ENCODE measurements at regions of chr7 and their contacts with region 1.

Region 1: GRCh38 chr7:77536413-77537135 is 521 bp upstream of the PTPN12 start:
- DNase-seq: peak; percentile 97
- H3K4me3 Mint-ChIP-seq: peak overlapping the region; percentile 78
- H3K27ac Mint-ChIP-seq: peak overlapping the region; percentile 86
- H3K4me1 Mint-ChIP-seq: peaks cover 12% of the 10 kb centered on the region
- H3K27me3 Mint-ChIP-seq: no peaks in the 10 kb centered on the region
- CTCF ChIP-seq: no peak

Region 2: GRCh38 chr7:77331938-77332695 is 204.5 kb before region 1 on chr7:
- CTCF ChIA-PET with region 1: no interaction called
- POLR2A ChIA-PET with region 1: interaction called, 3 read pairs
- intact Hi-C with region 1: loop called (anchors 10 kb)
- DNase-seq: peak; percentile 90
- H3K4me3 Mint-ChIP-seq: no peak overlapping the region
- H3K27ac Mint-ChIP-seq: no peak overlapping the region
- H3K4me1 Mint-ChIP-seq: peaks cover 26% of the 10 kb centered on the region
- H3K27me3 Mint-ChIP-seq: no peaks in the 10 kb centered on the region
- CTCF ChIP-seq: peak; percentile 75

Region 3: DNA sequence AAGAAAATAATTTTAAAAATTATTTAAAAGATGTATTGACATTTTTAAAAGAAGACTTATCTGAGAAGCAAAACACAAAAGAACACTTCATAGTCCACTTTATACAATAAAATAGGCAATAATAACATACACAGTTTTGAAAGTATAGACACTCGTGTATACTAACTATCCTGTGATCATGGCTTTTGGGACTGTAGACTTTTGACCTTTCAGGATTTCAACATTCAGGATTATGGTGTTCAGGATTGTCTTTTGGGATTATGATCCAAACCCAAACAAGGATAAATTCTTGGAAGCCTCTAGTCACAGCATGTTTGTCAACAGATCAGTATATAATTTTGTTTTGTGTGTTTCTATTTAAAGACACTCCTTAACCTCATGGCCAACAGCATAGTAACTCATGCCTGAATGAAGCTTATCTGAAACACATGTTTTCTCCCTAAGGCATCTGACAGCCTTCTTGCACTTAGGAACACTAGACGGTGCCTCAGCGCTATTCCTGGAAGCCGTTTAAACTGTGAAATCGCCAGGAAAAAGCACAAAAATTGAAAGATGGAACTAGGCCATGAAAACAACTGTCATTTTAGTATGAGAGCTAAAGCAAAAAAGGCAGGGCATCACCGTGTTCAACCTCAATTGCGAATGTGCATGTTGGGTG is 150.3 kb before region 1 on chr7:
- CTCF ChIA-PET with region 1: no interaction called
- POLR2A ChIA-PET with region 1: no interaction called
- intact Hi-C with region 1: no loop called
- DNase-seq: no peak
- H3K4me3 Mint-ChIP-seq: no peak overlapping the region
- H3K27ac Mint-ChIP-seq: no peak overlapping the region
- H3K4me1 Mint-ChIP-seq: peaks cover 7% of the 10 kb centered on the region
- H3K27me3 Mint-ChIP-seq: no peaks in the 10 kb centered on the region
- CTCF ChIP-seq: no peak

Region 4: DNA sequence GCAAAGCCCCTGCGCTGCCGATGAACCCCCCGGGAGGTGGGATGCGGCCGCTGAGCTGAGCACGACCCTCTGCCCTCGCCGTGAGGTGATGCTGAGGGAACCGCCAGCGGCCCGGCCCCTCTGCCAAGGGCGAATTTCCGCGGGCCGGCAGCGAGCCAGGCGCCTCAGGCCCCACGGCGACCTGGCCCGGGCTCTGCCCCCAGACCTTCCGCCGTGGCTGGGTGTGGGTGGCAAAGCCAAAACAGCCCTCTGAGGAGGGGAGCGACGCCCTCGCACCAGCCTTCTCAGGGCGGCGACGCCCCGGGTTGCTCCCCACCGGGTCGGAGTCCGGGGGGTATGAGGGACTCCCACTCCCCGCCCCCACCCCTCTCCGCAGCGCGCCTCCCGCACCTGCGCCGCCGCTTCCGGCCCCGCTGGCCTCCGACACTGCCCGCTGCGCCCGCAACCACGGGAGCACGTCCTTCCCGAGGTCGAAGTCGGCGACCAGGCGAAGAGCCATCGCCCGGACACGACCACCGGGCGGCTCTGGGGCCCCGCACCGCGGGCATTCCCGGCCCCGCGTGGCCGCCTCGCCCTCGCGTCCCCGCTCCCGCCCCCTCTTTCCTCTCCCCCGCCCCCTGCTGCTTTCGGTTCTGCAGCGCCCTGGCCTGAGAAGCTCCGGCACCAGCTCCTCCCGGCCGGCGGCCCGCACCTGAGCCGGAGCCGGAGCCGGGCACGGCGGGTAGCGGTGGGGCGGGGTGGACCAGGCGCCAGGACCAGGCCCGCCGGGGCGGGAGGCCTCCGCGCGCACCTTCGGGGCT is 120.6 kb before region 1 on chr7 and contains the start of gene GSAP:
- CTCF ChIA-PET with region 1: no interaction called
- POLR2A ChIA-PET with region 1: interaction called, 22 read pairs
- intact Hi-C with region 1: loop called (anchors 5 kb)
- DNase-seq: peak; percentile 61
- H3K4me3 Mint-ChIP-seq: peak within 1 kb of the TSS; percentile 66
- H3K27ac Mint-ChIP-seq: peak within 1 kb of the TSS; percentile 35
- H3K4me1 Mint-ChIP-seq: peaks cover 1% of the 10 kb centered on the region
- H3K27me3 Mint-ChIP-seq: no peaks in the 10 kb centered on the region
- CTCF ChIP-seq: no peak
- total RNA-seq, gene GSAP: 13.7 and 19.0 TPM in 2 replicates

Region 5: DNA sequence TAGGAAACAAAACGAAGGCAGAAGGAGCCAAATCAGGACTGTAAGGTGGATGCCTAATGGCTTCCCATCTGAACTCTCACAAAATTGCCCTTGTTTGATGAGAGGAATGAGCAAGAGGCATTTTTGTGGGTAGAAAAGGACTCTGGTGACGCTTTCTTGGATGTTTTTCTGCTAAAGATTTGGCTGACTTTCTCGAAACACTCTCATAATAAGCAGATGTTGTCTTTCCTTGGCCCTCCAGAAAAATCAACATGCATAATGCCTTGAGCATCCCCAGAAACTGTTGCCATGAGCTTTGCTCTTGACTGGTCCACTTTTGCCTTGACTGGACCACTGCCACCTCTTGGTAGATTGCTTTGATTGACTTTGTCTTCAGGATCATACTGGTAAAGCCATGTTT is 14.0 kb after region 1 on chr7:
- CTCF ChIA-PET with region 1: interaction called, 3 read pairs
- POLR2A ChIA-PET with region 1: interaction called, 15 read pairs
- intact Hi-C with region 1: no loop called
- DNase-seq: no peak
- H3K4me3 Mint-ChIP-seq: no peak overlapping the region
- H3K27ac Mint-ChIP-seq: no peak overlapping the region
- H3K4me1 Mint-ChIP-seq: peaks cover 60% of the 10 kb centered on the region
- H3K27me3 Mint-ChIP-seq: no peaks in the 10 kb centered on the region
- CTCF ChIP-seq: no peak

Region 6: GRCh38 chr7:77566421-77566820 is 29.8 kb after region 1 on chr7:
- CTCF ChIA-PET with region 1: interaction called, 4 read pairs
- POLR2A ChIA-PET with region 1: interaction called, 62 read pairs
- intact Hi-C with region 1: no loop called
- DNase-seq: no peak
- H3K4me3 Mint-ChIP-seq: peak overlapping the region; percentile 39
- H3K27ac Mint-ChIP-seq: peak overlapping the region; percentile 91
- H3K4me1 Mint-ChIP-seq: peaks cover 40% of the 10 kb centered on the region
- H3K27me3 Mint-ChIP-seq: no peaks in the 10 kb centered on the region
- CTCF ChIP-seq: no peak

Measured in MCF 10A (cell line).